Dorsolateral prefrontal cortex (tissue), 120 donors: ENCODE measurements at regions of chr10 and their contacts with region 1.

Region 1: GRCh38 chr10:97632949-97633884 is at the start of gene MORN4:
- DNase-seq: peak; percentile 93 to 97 (median 96)
- H3K4me3 ChIP-seq: peak within 1 kb of the TSS; percentile 63 to 95 (median 84)
- H3K27ac ChIP-seq: peak within 1 kb of the TSS in 51 of 59 donors; percentile 17 to 91 (median 77)
- H3K27me3 ChIP-seq: no peaks in the 10 kb centered on the region
- CTCF ChIP-seq: peak in 16 of 56 donors; percentile 6 to 44 (median 17)
- total RNA-seq, gene MORN4: 13.6 to 56.9 (median 33.3) TPM

Region 2: GRCh38 chr10:97508342-97508741 is 124.9 kb before region 1 on chr10:
- intact Hi-C with region 1: no loop called
- DNase-seq: peak in 1 of 10 donors; percentile 39
- H3K4me3 ChIP-seq: no peak overlapping the region
- H3K27ac ChIP-seq: no peak overlapping the region
- H3K27me3 ChIP-seq: no peaks in the 10 kb centered on the region
- CTCF ChIP-seq: no peak

Region 3: DNA sequence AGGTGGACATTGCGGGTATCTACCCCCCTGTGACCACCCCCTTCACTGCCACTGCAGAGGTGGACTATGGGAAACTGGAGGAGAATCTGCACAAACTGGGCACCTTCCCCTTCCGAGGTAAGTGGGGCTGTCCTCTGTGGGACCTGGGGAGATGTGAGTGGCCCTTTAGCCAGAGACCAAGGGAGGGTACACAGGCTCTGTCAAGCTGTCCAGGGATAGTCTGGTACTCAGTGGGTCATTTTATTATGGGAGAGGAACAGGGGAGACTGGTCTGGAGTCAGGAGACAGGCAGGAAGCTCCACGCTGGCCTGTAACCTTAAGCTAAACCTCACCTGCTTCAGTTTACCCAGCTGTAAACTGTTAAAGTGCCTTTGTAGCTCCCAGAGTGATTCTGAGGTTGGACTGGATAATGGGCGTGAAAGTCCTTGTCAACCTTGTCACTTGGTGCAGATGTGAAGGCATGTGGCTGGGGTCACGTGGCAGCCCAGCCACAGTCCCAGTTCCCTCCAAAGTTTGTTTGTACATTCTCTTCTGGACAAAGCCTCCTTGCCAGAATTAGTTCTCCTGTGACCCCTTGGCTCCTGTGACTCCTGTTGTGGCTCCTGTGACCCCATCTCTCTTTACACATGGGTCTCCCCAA is 48.3 kb before region 1 on chr10:
- intact Hi-C with region 1: loop called in 1 of 2 experiments (anchors 5 kb)
- DNase-seq: no peak
- H3K4me3 ChIP-seq: peak overlapping the region in 40 of 59 donors; percentile 1 to 59 (median 27)
- H3K27ac ChIP-seq: peak overlapping the region in 45 of 59 donors; percentile 21 to 92 (median 77)
- H3K27me3 ChIP-seq: no peaks in the 10 kb centered on the region
- CTCF ChIP-seq: no peak